Activated T-helper 1 cell treated with anti-CD3 and anti-CD28 coated beads, Interleukin-12 subunit alpha, Interleukin-12 subunit beta, Interleukin-2, Interleukin-4 antibody, amounts not matched to agents 30 ng/mL and 10 ng/mL and 1 ng/mL, durations not matched to agents 14 hours and 24 hours and 36 hours (primary cell): ENCODE measurements at regions of chr10 and their contacts with region 1.

Region 1: DNA sequence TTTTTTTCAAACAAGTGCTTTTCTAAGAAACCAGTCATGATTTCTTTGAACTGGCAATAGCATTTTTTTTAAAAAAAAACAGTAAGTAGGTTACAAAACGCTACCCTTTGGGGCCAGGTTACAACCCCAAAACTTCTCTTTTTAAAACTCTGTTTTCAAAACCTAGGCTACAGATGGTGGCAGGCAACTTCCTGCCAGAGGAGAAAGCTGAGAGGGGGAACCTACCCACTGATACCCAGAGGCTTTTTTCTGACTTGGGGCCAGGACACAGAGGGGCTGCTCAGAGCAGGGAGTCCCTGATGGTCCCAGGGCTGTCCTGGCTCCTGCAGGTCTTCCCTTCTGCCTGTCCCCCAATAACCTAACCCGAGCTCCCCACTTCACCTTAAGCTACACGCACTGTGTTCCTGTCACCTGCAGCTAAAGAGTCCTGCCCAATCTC is 6.9 kb downstream of the STN1 start:
- DNase-seq: peak; percentile 54
- H3K4me3 Mint-ChIP-seq: peak overlapping the region; percentile 68
- H3K27ac Mint-ChIP-seq: peak overlapping the region; percentile 90
- H3K4me1 Mint-ChIP-seq: peaks cover 72% of the 10 kb centered on the region
- H3K27me3 Mint-ChIP-seq: no peaks in the 10 kb centered on the region

Region 2: DNA sequence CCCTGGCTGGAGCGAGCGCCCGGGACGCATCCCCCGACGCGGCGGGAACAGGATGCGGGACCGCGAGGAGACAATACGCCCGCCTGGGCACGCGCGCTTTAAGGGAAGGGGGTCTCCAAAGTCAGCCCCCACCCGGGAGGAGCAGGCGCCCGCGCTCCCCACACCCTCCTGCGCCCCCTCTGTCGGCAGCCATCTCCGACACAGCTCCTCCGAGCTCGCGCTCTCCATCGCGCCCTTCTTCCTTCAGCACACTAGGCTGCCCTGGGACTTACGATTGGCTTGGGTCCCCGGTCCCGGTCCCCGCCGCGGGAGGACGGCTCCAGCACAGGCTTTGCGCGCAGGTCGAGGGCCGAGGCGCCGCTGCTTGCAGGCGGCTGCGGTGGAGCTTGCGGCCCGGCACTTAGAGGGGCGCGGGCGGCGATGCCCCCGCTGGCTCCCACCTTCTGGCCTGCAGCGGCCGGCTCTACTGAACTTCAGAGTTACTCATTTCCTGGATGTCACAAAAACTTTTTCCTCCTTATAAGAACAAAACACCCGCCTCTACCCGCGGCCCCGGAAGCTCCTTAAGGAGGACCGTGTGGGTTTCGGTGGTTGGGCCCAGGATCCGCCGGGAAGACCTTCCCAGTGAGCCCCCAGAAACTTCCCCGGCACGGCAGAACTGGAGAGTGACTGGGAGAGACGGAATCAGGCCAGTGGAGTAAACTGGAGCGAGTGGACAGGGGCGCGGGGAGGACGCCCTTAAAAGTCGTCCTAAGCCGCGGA is 427.1 kb after region 1 on chr10 and contains the start of gene ITPRIP:
- intact Hi-C with region 1: loop called (anchors 5 kb)
- DNase-seq: peak; percentile 68
- H3K4me3 Mint-ChIP-seq: peak within 1 kb of the TSS; percentile 100
- H3K27ac Mint-ChIP-seq: peak within 1 kb of the TSS; percentile 100
- H3K4me1 Mint-ChIP-seq: peaks cover 57% of the 10 kb centered on the region
- H3K27me3 Mint-ChIP-seq: peaks cover 5% of the 10 kb centered on the region
- total RNA-seq, gene ITPRIP: 17.3 and 18.1 TPM in 2 replicates